ENCODE measurements at regions of chr17 and their contacts with region 1.

Region 1: DNA sequence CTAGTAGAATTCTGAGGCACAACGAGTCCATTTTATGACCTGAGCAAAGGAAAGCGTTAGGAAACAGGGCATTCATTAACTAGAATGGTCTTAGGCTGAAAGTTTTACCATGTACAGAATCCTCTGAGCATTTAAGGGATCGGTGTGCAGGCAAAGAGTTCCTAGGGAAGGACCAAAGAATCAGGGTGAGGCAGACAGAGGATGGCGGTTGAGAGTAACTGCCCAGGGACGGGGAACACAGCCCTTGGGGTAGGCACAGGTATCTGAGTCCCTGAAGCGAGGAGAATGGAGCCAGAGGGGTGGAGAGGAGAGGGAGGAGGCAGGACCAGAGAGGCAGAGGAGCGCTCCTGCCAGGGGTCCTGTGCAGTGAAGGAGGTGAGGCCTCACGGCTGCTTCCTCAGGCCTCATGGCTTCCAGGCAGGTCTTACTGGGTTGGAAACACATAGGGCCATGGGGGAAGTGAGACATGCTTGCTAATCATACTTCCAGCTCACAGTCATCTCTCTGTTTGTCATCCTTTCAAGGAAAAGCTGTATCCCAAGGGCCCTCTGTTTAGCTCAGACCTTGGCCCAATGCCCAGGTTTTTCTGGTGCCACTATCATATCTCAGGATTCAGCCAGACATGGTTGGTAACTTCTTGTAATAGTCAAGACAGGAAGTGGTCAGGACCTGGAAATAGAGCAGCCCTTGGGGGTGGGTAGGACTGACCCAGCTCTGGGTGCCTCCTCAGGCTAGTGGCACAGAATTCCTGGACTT is 13.8 kb upstream of the ITGB3 start:
- DNase-seq: peak; percentile 82 to 98
- H3K4me3 ChIP-seq: no peak overlapping the region
- H3K27ac ChIP-seq: peak overlapping the region; percentile 95
- H3K4me1 ChIP-seq: peaks cover 0 to 19% of the 10 kb centered on the region in 2 donors
- H3K27me3 ChIP-seq: no peaks in the 10 kb centered on the region
- CTCF ChIP-seq: no peak

Region 2: DNA sequence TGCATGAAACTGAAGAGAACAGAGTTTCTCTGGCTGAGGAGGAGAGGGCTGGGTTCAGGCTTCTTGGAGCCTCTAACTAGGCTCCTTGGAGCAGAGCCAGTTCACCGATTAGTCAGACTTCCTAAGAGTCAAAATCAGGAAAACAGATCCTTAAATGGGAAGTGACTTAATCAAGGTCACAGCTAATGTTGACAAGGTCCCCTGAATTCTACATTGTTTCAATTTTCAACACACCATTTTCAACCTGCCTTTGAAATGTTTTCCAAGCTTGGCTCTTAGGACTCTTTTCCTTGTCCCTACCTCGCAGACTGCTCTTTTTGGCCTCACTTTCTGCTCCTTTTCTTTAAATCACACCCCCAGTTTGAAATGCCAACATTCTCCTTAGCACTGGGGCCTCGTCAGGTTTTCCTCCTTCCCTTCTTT is 14.3 kb before region 1 on chr17:
- intact Hi-C with region 1: no loop called
- DNase-seq: peak; percentile 56 to 96
- H3K4me3 ChIP-seq: no peak overlapping the region
- H3K27ac ChIP-seq: peak overlapping the region; percentile 92 to 93
- H3K4me1 ChIP-seq: peaks cover 15 to 49% of the 10 kb centered on the region in 2 donors
- H3K27me3 ChIP-seq: no peaks in the 10 kb centered on the region
- CTCF ChIP-seq: no peak

Region 3: DNA sequence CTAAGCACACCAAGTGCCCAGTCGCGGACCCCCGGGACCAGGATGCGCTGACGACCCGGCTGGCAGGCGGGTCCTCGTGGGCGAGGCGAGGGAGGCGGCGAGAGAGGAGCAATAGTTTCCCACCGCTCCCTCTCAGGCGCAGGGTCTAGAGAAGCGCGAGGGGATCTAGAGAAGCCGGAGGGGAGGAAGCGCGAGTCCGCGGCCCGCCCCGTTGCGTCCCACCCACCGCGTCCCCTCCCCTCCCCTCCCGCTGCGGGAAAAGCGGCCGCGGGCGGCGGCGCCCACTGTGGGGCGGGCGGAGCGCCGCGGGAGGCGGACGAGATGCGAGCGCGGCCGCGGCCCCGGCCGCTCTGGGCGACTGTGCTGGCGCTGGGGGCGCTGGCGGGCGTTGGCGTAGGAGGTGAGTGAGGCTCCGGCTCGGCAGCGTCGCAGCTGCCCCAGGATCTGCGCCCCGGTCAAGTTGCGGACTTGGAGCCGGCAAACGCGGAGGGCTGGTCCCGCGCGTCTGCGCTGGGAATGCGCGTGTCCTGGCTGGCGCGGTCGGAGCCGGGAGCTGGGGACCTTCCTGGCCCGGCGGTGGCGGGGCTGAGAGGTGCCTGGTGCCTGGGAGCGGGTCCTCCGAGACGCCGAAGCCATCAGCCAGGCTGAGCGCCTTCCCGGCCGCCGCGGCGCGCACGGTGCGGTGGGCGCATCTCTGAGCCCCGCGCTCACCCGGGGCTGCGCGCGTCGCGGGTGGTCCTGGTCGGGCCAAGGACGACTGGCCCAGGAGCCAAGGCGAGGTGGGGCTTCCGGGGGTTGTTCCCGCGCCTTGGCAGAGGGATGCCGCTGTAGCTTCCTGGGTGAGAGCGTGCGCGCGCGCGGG is 14.0 kb after region 1 on chr17 and contains the start of gene ITGB3:
- intact Hi-C with region 1: loop called (anchors 2 kb)
- DNase-seq: peak in 1 of 2 donors; percentile 90
- H3K4me3 ChIP-seq: peak within 1 kb of the TSS; percentile 79 to 90
- H3K27ac ChIP-seq: peak within 1 kb of the TSS; percentile 92 to 95
- H3K4me1 ChIP-seq: peaks cover 10 to 38% of the 10 kb centered on the region in 2 donors
- H3K27me3 ChIP-seq: no peaks in the 10 kb centered on the region
- CTCF ChIP-seq: peak; percentile 41 to 49 (median 45)
- total RNA-seq, gene ITGB3: 71.3 TPM

Measured in ascending aorta (tissue), 2 donors.